RWPE1 (cell line): ENCODE measurements at regions of chr17 and their contacts with region 1.

Region 1: DNA sequence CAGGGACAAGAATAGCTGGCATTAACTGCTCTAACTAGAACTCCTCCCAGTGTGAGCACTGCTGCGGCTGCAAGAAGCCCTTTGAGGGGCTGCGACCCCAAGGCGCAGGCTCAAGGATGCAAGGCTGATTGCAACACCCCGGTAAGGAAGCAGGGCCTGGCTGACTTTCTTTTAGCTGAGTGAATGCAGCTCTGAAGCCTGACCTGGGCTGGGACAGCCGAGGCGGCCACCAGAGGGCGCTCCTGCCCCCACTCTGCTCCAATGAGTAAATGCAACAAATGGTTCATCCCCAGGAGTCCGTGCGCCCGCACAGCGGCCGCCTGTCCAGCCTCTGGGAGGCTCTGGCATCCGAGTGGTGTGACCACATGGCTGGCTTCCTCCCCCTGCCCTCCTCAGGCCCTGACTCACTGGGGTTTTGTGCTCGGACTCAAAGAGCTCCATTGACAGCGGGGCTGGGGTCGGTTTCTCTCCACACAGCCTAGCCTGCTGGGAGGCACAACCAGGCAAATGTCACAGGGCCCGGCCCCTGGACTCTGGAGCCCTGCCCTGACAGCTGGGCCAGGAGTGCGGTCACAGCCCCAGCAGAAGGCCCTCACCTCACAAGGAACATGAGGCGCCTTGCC is at the start of gene SMIM5:
- DNase-seq: peak; percentile 85
- H3K27ac ChIP-seq: peak within 1 kb of the TSS; percentile 70
- CTCF ChIP-seq: peak; percentile 98

Region 2: GRCh38 chr17:75589012-75589918 is 43.7 kb before region 1 on chr17:
- CTCF ChIA-PET with region 1: interaction called, 10 read pairs
- POLR2A ChIA-PET with region 1: no interaction called
- DNase-seq: peak; percentile 96
- H3K27ac ChIP-seq: peak overlapping the region; percentile 77
- CTCF ChIP-seq: peak; percentile 88

Region 3: DNA sequence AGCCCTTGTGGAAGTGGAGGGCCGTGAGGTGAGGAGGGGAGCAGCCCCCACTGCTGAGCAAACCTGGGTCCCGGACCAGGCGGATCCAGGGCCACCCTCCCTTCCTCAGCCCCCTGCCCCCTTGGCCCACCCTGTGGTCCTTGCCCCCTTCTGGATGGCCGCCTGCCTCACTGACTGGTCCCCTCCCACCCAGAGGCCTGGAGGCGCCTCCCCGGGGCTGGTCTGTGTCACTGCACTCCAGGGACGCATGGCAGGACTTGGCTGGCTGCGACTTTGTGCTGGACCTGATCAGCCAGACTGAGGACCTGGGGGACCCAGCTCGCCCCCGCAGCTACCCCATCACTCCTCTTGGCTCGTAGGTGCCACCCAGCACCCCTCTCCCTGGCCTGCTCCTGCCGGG is 19.0 kb before region 1 on chr17:
- CTCF ChIA-PET with region 1: interaction called, 16 read pairs
- POLR2A ChIA-PET with region 1: no interaction called
- DNase-seq: no peak
- H3K27ac ChIP-seq: no peak overlapping the region
- CTCF ChIP-seq: no peak

Region 4: DNA sequence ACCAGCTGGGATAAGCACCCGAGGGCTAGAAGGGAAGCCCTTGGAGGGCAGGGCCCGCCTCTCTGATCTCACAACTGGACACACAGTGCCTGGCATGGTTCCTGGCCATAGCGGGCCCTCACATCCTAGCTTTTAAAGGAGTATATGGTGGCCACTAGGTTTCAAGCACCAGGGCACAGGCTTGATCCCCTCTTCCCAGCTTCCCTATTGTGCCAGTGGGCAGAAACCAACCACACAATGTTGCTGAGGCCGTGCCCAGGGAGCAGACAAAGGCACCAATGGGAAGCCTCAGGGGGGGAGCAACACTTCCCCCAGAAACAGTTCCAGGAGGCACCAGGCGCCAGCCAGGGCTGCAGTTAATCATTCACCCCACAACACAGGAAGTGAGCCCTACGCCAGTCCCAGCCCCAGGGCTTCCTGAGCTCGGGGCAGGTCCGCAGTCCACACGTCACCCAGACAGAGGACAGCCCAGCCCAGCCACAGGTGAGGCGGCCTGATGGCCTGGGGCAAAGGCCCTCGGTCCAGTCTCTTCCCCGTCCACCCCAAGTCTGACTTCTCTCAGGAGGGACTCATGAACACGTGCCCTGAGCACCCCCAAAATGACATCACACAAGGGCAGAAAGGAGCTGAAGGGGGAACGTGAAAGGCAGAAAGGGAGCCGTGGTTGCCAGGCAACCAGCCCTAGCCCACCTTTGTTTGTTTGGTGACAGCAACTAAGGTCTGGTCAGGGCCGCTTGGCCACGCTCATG is 13.1 kb after region 1 on chr17:
- CTCF ChIA-PET with region 1: interaction called, 54 read pairs
- POLR2A ChIA-PET with region 1: no interaction called
- DNase-seq: peak; percentile 77
- H3K27ac ChIP-seq: peak overlapping the region; percentile 68
- CTCF ChIP-seq: no peak

Region 5: DNA sequence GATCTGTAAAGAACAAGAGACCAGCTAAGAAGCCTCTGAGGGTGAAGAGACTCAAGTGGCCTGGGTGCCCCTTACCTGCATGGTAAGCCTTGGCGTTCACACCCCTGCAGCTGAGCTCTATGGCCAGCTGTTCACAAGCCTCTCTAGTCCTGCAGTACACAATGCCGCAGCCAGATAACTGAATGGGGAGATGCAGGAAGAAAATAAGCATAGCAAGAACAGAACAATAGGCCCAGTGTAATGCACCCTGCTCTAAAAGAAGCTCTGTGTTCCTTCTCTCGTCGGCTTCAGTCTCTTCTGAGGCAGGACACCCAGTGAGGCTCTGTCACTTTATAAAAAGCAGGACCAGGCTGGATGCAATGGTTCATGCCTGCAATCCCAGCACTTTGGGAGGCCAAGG is 28.6 kb after region 1 on chr17:
- CTCF ChIA-PET with region 1: interaction called, 16 read pairs
- POLR2A ChIA-PET with region 1: no interaction called
- DNase-seq: no peak
- H3K27ac ChIP-seq: no peak overlapping the region
- CTCF ChIP-seq: no peak

Region 6: DNA sequence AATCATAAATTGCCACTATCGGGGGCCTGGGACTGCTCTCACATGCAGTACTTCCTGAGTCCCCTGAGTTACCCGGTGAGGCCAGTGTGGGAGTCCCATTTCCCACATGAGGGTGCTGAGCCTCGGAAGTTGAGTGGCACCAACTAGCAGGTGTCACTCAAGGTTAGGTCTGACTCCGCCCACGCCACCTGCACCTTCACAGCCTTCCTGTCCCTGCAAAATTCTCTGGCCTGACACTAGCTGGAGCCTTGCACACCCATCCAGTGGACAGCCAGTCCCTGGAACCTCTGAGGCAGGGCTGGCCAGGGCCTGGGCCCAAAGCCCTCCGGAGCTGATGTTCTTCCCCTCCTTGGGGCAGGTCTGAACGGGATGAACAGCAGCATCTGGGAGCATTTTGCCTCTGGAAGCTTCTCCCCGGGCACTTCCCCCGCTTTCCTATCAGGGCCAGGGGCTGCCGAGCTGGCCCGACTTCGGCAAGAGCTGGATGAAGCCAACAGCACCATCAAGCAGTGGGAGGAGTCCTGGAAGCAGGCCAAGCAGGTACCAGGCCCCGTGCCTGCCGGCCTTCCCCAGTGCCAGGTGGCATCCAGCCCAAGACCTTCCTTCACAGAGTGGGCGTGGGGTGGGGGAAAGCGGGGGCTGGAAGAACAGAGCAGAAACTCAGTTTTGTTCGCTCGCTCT is 189.3 kb after region 1 on chr17:
- CTCF ChIA-PET with region 1: no interaction called
- POLR2A ChIA-PET with region 1: no interaction called
- DNase-seq: no peak
- H3K27ac ChIP-seq: peak overlapping the region; percentile 71
- CTCF ChIP-seq: no peak